Endothelial cell of umbilical vein (primary cell): ENCODE measurements at regions of chr6 and their contacts with region 1.

Region 1: DNA sequence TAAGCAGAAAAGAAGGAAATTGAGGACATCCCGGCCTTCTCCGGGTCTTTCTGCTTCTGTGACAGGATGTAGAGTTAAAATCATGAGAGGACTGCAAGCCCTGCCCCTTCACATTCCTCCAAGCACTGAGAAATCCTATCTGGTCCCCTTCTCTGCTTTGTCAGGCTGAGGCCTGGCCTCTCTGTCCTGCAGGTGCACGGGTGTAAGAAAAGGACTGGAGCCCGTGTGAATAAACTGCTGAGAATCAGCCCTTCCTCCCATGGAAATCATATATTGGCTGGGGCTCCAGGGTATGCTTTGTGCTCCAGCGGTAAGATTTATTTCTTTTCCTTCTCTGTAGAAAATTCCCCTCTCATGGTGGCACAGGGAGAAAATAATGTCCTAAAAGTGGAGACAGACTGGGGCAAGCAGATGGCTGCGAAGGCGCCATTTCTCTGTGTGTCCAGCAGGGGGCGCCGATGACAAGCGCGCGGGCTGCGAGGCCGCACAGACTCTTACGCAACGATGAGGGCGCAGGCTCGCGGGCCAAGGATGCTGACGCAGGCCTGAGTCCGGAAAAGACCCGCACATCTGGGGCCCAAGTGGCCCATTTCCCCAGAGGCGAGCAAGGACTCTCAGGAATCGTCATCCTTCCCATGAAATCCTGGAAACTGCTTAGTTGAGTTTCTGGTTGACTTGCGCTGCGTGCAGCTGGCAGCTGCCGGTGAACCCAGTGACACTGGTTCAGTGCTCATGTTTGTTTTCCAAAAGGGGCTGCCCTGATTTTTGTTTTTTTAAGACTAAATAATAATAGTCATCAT is 258.6 kb downstream of the ADGB start:
- DNase-seq: peak; percentile 77
- H3K4me3 ChIP-seq: peak overlapping the region in 1 of 3 experiments; percentile 12
- H3K27ac ChIP-seq: no peak overlapping the region
- H3K4me1 ChIP-seq: peaks cover 2% of the 10 kb centered on the region
- H3K27me3 ChIP-seq: no peaks in the 10 kb centered on the region
- CTCF ChIP-seq: peak; percentile 93 to 96
- POLR2A ChIP-seq: no peak

Region 2: GRCh38 chr6:146913842-146914488 is 56.6 kb after region 1 on chr6:
- CTCF ChIA-PET with region 1: no interaction called
- POLR2A ChIA-PET with region 1: no interaction called
- dilution Hi-C with region 1: no loop called
- intact Hi-C with region 1: loop called (anchors 1 kb)
- DNase-seq: peak; percentile 98
- H3K4me3 ChIP-seq: peak overlapping the region in 2 of 3 experiments; percentile 10 to 45
- H3K27ac ChIP-seq: peak overlapping the region; percentile 99
- H3K4me1 ChIP-seq: peaks cover 39% of the 10 kb centered on the region
- H3K27me3 ChIP-seq: no peaks in the 10 kb centered on the region
- CTCF ChIP-seq: no peak
- POLR2A ChIP-seq: no peak

Region 3: DNA sequence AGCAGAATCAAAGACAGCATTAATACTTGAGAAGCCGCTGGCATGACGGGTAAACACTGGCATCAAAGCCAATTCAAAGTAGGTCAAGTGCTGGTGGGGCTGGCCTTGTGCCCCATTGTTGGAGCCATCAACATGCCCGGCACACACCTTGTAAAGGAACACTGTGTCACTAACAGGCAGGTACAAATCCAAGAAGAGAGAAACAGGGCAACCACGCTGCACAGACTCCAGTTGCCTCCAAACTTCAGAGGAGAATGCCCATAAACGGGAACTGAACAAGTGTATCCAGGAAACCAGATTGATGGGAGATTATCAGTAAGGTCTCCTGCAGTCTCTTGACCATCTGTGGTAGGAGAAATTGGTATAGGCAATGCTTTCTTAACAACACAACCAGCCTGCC is 219.9 kb after region 1 on chr6:
- CTCF ChIA-PET with region 1: no interaction called
- POLR2A ChIA-PET with region 1: no interaction called
- dilution Hi-C with region 1: no loop called
- intact Hi-C with region 1: loop called (anchors 10 kb)
- DNase-seq: no peak
- H3K4me3 ChIP-seq: no peak overlapping the region
- H3K27ac ChIP-seq: no peak overlapping the region
- H3K4me1 ChIP-seq: no peaks in the 10 kb centered on the region
- H3K27me3 ChIP-seq: no peaks in the 10 kb centered on the region
- CTCF ChIP-seq: no peak
- POLR2A ChIP-seq: no peak

Region 4: GRCh38 chr6:147202516-147203312 is 345.3 kb after region 1 on chr6:
- CTCF ChIA-PET with region 1: no interaction called
- POLR2A ChIA-PET with region 1: no interaction called
- dilution Hi-C with region 1: no loop called
- intact Hi-C with region 1: loop called (anchors 1 kb)
- DNase-seq: peak; percentile 95
- H3K4me3 ChIP-seq: peak overlapping the region; percentile 58 to 92 (median 89)
- H3K27ac ChIP-seq: peak overlapping the region; percentile 86
- H3K4me1 ChIP-seq: peaks cover 20% of the 10 kb centered on the region
- H3K27me3 ChIP-seq: no peaks in the 10 kb centered on the region
- CTCF ChIP-seq: no peak
- POLR2A ChIP-seq: peak; percentile 61

Region 5: GRCh38 chr6:147285087-147285855 is 427.9 kb after region 1 on chr6:
- CTCF ChIA-PET with region 1: interaction called, 3 read pairs
- POLR2A ChIA-PET with region 1: no interaction called
- dilution Hi-C with region 1: no loop called
- intact Hi-C with region 1: loop called (anchors 1 kb)
- DNase-seq: peak; percentile 62
- H3K4me3 ChIP-seq: no peak overlapping the region
- H3K27ac ChIP-seq: no peak overlapping the region
- H3K4me1 ChIP-seq: peaks cover 12% of the 10 kb centered on the region
- H3K27me3 ChIP-seq: no peaks in the 10 kb centered on the region
- CTCF ChIP-seq: peak; percentile 26 to 27
- POLR2A ChIP-seq: no peak

Region 6: GRCh38 chr6:147382945-147383554 is 525.7 kb after region 1 on chr6:
- CTCF ChIA-PET with region 1: interaction called, 4 read pairs
- POLR2A ChIA-PET with region 1: no interaction called
- dilution Hi-C with region 1: no loop called
- intact Hi-C with region 1: loop called (anchors 5 kb)
- DNase-seq: peak; percentile 44
- H3K4me3 ChIP-seq: no peak overlapping the region
- H3K27ac ChIP-seq: no peak overlapping the region
- H3K4me1 ChIP-seq: no peaks in the 10 kb centered on the region
- H3K27me3 ChIP-seq: no peaks in the 10 kb centered on the region
- CTCF ChIP-seq: peak; percentile 24 to 33
- POLR2A ChIP-seq: no peak